ENCODE measurements at regions of chr14 and their contacts with region 1.

Region 1: GRCh38 chr14:105203057-105203531 is 22.0 kb upstream of the NUDT14 start:
- DNase-seq: peak; percentile 72 to 84
- ATAC-seq: peak; percentile 26 to 67 (median 42)
- H3K4me3 ChIP-seq: no peak overlapping the region
- H3K27ac ChIP-seq: peak overlapping the region in 6 of 10 donors; percentile 23 to 84 (median 78)
- H3K4me1 ChIP-seq: peaks cover 30 to 92% (median 80%) of the 10 kb centered on the region in 9 donors
- H3K27me3 ChIP-seq: peaks cover 0 to 43% (median 2%) of the 10 kb centered on the region in 7 donors
- CTCF ChIP-seq: peak; percentile 90 to 98 (median 93)

Region 2: DNA sequence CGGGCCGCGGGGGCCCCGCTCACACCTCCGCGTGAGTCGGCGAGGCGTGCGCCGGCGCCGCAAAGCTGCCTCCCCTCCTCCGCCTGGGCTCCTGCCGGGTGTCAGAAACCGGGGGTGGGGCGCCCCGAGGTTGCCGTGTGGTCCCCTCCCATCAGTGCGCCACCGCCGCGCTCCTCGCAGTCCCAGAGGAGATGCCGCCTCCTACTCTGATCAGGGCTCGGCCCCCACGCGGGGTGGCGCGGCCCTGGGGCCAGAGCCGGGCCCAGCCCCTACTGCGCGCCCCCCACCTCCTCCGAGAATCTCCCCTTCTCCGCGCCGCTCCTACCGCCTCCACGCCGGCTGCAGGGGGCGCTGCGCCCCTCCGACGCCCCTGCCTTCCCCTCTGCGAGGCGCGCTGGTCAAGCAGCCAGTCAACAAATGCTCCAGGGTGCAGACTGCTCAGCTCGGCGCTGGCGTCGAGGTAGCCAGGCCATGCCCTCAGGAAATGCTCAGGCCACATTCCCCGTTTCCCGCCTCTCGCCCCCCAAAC is 34.1 kb before region 1 on chr14:
- intact Hi-C with region 1: loop called in 1 of 10 experiments (anchors 5 kb)
- DNase-seq: peak; percentile 46 to 56
- ATAC-seq: peak; percentile 23 to 57 (median 44)
- H3K4me3 ChIP-seq: peak overlapping the region in 9 of 10 donors; percentile 32 to 56 (median 44)
- H3K27ac ChIP-seq: peak overlapping the region in 8 of 10 donors; percentile 52 to 82 (median 78)
- H3K4me1 ChIP-seq: peaks cover 18 to 59% (median 49%) of the 10 kb centered on the region in 9 donors
- H3K27me3 ChIP-seq: peaks cover 0 to 47% (median 9%) of the 10 kb centered on the region in 7 donors
- CTCF ChIP-seq: peak; percentile 25 to 70 (median 56)

Region 3: GRCh38 chr14:105240951-105241576 is 38.0 kb after region 1 on chr14:
- intact Hi-C with region 1: no loop called
- DNase-seq: no peak
- ATAC-seq: peak in 2 of 8 donors; percentile 31 to 47
- H3K4me3 ChIP-seq: no peak overlapping the region
- H3K27ac ChIP-seq: no peak overlapping the region
- H3K4me1 ChIP-seq: peaks cover 0 to 8% (median 0%) of the 10 kb centered on the region in 9 donors
- H3K27me3 ChIP-seq: no peaks in the 10 kb centered on the region
- CTCF ChIP-seq: no peak

Region 4: GRCh38 chr14:105281371-105282097 is 78.4 kb after region 1 on chr14:
- intact Hi-C with region 1: loop called in 7 of 10 experiments (anchors 1 to 10 kb)
- DNase-seq: no peak
- ATAC-seq: peak in 2 of 8 donors; percentile 13 to 36
- H3K4me3 ChIP-seq: no peak overlapping the region
- H3K27ac ChIP-seq: no peak overlapping the region
- H3K4me1 ChIP-seq: peaks cover 0 to 19% (median 14%) of the 10 kb centered on the region in 9 donors
- H3K27me3 ChIP-seq: no peaks in the 10 kb centered on the region
- CTCF ChIP-seq: peak; percentile 13 to 74 (median 59)

Region 5: DNA sequence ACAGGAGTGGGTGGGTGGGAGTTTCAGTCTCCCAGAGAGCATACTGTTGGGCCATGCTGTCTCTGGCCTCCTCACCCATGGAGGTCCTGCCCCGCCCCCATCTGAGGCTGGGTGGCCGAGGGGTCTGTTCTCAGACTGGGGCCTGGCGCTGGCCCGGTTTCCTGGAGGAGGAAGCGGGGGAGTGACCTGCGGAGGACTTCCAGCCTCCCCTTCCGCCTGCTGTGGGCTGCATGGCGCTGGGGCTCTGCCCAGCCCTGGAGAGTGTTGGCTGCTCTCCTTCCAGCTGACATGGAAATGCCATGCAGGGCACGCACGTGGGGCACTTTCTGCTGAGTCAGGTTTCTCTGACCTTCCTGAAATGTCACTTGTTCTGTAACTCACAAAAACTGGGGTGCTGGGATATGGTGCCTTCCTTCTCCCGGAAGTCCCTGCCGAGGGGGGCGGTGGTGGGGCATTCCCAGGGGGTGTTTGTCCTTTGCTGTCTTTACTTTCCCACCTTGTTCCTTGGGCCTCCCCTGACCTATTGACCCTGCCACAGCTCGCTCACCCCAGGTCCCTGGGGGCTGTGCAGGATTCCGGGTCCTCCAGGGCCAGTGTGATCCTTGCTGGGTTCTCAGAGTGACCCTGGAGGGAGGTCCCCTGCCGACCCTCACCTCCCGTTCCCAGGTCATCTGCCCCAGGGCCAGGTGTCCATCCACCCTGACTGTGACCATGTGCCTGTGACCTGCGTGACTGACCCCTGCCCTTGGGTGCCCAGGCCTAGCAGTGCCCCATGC is 135.1 kb after region 1 on chr14:
- intact Hi-C with region 1: loop called in 1 of 10 experiments (anchors 5 kb)
- DNase-seq: peak; percentile 73
- ATAC-seq: peak; percentile 64 to 81 (median 73)
- H3K4me3 ChIP-seq: no peak overlapping the region
- H3K27ac ChIP-seq: peak overlapping the region; percentile 26 to 87 (median 71)
- H3K4me1 ChIP-seq: peaks cover 31 to 87% (median 67%) of the 10 kb centered on the region in 9 donors
- H3K27me3 ChIP-seq: no peaks in the 10 kb centered on the region
- CTCF ChIP-seq: no peak

Region 6: GRCh38 chr14:105351920-105352851 is 149.1 kb after region 1 on chr14:
- intact Hi-C with region 1: loop called (anchors 1 to 5 kb)
- DNase-seq: peak; percentile 78 to 84
- ATAC-seq: peak; percentile 79 to 94 (median 89)
- H3K4me3 ChIP-seq: no peak overlapping the region
- H3K27ac ChIP-seq: peak overlapping the region in 5 of 10 donors; percentile 4 to 58 (median 30)
- H3K4me1 ChIP-seq: peaks cover 0 to 14% (median 6%) of the 10 kb centered on the region in 9 donors
- H3K27me3 ChIP-seq: no peaks in the 10 kb centered on the region
- CTCF ChIP-seq: peak; percentile 74 to 89 (median 86)

Measured in heart right ventricle (tissue), 16 donors.